ENCODE measurements at regions of chr1 and their contacts with region 1.

Region 1: DNA sequence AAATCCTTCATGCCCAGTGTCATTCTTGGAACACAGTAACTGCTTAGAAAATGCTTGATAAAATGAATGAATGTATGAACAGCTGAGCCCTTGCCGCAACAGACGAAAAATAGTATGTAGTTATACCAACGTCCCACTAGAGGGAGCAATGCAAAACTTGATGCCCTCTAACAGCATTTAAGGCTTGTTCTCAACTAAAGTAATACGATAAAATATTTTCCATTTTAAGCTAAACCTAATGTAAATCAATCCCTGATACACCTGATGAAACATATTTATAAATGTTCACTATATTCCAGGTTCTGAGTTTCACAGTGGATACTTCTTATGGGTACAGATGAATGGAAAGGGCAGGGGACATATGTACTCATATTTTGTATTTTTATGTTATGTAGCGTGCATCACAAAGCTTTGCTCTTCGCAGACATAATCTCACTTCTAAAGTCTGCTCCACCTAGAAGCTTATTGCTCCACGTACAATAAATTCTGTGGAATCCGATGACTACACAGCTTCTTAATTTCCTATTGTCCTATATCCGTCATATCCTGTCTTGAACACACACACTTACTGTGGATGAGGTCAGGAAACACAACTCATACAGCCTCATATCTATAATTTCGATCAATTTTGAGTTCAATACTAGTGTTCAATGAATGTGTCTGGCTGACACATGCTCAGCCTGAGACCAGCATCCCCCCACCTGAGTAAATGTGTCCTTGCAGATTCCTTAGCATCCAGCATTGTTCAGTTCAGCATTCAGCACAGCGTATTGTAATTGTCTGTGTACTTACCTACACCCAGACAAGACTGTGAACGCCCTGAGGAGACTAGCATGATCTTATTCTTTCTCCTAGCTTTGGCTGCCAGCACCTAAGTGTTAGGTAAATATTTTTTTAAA is 4.4 kb upstream of the UTP25 start:
- DNase-seq: peak; percentile 39
- H3K4me3 Mint-ChIP-seq: no peak overlapping the region
- H3K27ac Mint-ChIP-seq: no peak overlapping the region
- H3K4me1 Mint-ChIP-seq: peaks cover 20% of the 10 kb centered on the region
- H3K27me3 Mint-ChIP-seq: peaks cover 21% of the 10 kb centered on the region

Region 2: GRCh38 chr1:209601809-209602657 is 221.4 kb before region 1 on chr1:
- CTCF ChIA-PET with region 1: no interaction called
- POLR2A ChIA-PET with region 1: no interaction called
- DNase-seq: peak; percentile 51
- H3K4me3 Mint-ChIP-seq: no peak overlapping the region
- H3K27ac Mint-ChIP-seq: no peak overlapping the region
- H3K4me1 Mint-ChIP-seq: peaks cover 3% of the 10 kb centered on the region
- H3K27me3 Mint-ChIP-seq: peaks cover 26% of the 10 kb centered on the region

Region 3: GRCh38 chr1:209800984-209801834 is 22.2 kb before region 1 on chr1:
- CTCF ChIA-PET with region 1: interaction called, 10 read pairs
- POLR2A ChIA-PET with region 1: no interaction called
- DNase-seq: no peak
- H3K4me3 Mint-ChIP-seq: no peak overlapping the region
- H3K27ac Mint-ChIP-seq: no peak overlapping the region
- H3K4me1 Mint-ChIP-seq: peaks cover 8% of the 10 kb centered on the region
- H3K27me3 Mint-ChIP-seq: peaks cover 18% of the 10 kb centered on the region

Region 4: DNA sequence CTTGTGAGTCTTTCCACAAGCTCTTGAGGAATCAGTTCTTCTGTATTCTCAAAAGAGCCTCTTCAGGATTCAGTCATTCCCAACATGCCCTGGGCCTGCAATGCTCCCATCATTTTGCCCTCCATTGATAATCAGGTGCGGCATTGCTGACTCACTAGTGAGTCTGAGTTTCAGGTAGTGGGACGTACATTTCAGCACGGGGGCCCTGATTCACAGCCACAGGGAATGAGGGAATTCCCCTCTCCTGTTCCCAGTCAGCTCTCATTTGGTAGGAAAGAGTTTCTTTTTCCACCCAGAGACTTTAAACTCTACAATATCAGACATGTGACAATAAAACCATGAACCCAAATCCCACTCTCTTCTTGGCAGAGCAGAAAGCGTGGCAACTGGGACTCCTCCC is 13.8 kb before region 1 on chr1:
- CTCF ChIA-PET with region 1: interaction called, 14 read pairs
- POLR2A ChIA-PET with region 1: no interaction called
- DNase-seq: no peak
- H3K4me3 Mint-ChIP-seq: no peak overlapping the region
- H3K27ac Mint-ChIP-seq: no peak overlapping the region
- H3K4me1 Mint-ChIP-seq: peaks cover 10% of the 10 kb centered on the region
- H3K27me3 Mint-ChIP-seq: peaks cover 2% of the 10 kb centered on the region

Region 5: GRCh38 chr1:209886219-209886536 is 62.8 kb after region 1 on chr1:
- CTCF ChIA-PET with region 1: no interaction called
- POLR2A ChIA-PET with region 1: no interaction called
- DNase-seq: no peak
- H3K4me3 Mint-ChIP-seq: no peak overlapping the region
- H3K27ac Mint-ChIP-seq: no peak overlapping the region
- H3K4me1 Mint-ChIP-seq: no peaks in the 10 kb centered on the region
- H3K27me3 Mint-ChIP-seq: peaks cover 27% of the 10 kb centered on the region